K562 (cell line): ENCODE measurements at regions of chr3 and their contacts with region 1.

Region 1: DNA sequence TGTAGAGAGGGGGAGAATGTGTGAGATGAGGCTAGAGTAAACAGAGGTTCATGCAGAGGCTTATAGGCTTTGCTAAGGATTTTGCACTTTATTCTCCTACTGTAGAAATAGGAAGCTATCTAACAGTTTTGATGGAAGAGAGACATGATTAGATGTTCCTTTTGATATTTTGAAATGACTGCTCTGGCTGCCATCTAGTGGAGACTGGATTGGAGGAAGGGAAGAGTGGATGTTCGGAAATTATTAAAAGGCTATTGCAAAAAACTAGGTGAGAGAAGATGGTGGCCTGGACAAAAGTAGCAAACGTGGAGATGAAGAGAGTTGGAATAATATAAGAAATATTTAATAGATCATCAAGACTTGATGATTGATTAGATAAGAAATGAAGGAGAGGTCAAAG is 42.2 kb downstream of the SYN2 start:
- DNase-seq: no peak
- ATAC-seq: no peak
- H3K4me3 ChIP-seq: no peak overlapping the region
- H3K27ac ChIP-seq: no peak overlapping the region
- H3K4me1 ChIP-seq: no peaks in the 10 kb centered on the region
- H3K27me3 ChIP-seq: 0 out of 5 replicates have a peak, but pooled peaks cover 0 to under 1% of the 10 kb centered on the region in 2 experiments
- CTCF ChIP-seq: peak in 2 of 3 experiments; percentile 33 to 53; a peak in 3 of 6 replicates
- EP300 ChIP-seq: no peak
- POLR2A ChIP-seq: no peak
- RAD21 ChIP-seq: peak; percentile 55 to 65; a peak in 3 of 4 replicates

Region 2: GRCh38 chr3:11846281-11847034 is 199.9 kb before region 1 on chr3 and contains the start of gene TAMM41:
- CTCF ChIA-PET with region 1: no interaction called
- POLR2A ChIA-PET with region 1: no interaction called
- in situ Hi-C with region 1: no loop called
- intact Hi-C with region 1: loop called (anchors 5 kb)
- DNase-seq: peak; percentile 93 to 98 (median 94)
- ATAC-seq: peak; percentile 100
- H3K4me3 ChIP-seq: peak within 1 kb of the TSS; percentile 91
- H3K27ac ChIP-seq: peak within 1 kb of the TSS; percentile 86
- H3K4me1 ChIP-seq: peaks cover 7 to 10% of the 10 kb centered on the region in 2 experiments; a peak in 3 of 5 replicates
- H3K27me3 ChIP-seq: no peaks in the 10 kb centered on the region
- CTCF ChIP-seq: peak; percentile 90 to 98 (median 98)
- EP300 ChIP-seq: peak; percentile 34; the same call in 1 of the 2 replicates
- POLR2A ChIP-seq: peak; percentile 98
- RAD21 ChIP-seq: peak; percentile 37 to 51
- polyA plus RNA-seq, gene TAMM41: 69.0 to 74.6 TPM

Region 3: DNA sequence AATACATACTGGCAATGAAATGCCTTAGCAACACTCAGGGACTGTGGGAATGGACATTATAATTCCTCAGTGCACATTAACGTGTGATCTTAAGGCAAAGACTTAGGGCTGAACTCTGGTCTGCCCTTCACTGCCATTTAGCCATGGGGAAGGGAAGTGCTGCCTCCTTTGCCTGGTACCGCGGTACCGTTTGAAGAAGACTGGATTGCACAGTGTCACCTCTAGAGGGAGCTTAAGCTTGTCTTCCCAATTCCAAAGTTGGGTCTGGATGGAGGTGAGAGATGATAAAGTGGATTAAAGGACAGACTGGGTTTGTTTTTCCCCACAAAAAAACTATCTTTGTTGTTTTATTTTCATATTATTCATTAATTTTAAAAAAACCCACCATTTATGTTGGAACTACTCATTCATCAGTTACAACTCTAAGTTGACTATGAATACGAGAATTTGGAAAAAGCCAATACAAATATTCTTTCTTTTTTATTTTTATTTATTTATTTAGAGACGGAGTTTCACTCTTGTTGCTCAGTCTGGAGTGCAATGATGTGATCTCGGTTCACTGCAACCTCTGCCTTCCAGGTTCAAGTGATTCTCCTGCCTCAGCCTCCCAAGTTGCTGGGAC is 102.2 kb before region 1 on chr3:
- CTCF ChIA-PET with region 1: no interaction called
- POLR2A ChIA-PET with region 1: no interaction called
- in situ Hi-C with region 1: no loop called
- intact Hi-C with region 1: loop called (anchors 5 kb)
- DNase-seq: peak; percentile 47 to 69 (median 54)
- ATAC-seq: peak; percentile 88
- H3K4me3 ChIP-seq: no peak overlapping the region
- H3K27ac ChIP-seq: no peak overlapping the region; the same call in 2 of the 3 replicates
- H3K4me1 ChIP-seq: no peaks in the 10 kb centered on the region
- H3K27me3 ChIP-seq: peaks cover 5 to 12% of the 10 kb centered on the region in 2 experiments; a peak in 2 of 5 replicates
- CTCF ChIP-seq: peak; percentile 74 to 82 (median 82)
- EP300 ChIP-seq: no peak
- POLR2A ChIP-seq: no peak
- RAD21 ChIP-seq: peak in 1 of 2 experiments; percentile 58; a peak in 3 of 4 replicates